ENCODE measurements at regions of chr1 and their contacts with region 1.

Region 1: DNA sequence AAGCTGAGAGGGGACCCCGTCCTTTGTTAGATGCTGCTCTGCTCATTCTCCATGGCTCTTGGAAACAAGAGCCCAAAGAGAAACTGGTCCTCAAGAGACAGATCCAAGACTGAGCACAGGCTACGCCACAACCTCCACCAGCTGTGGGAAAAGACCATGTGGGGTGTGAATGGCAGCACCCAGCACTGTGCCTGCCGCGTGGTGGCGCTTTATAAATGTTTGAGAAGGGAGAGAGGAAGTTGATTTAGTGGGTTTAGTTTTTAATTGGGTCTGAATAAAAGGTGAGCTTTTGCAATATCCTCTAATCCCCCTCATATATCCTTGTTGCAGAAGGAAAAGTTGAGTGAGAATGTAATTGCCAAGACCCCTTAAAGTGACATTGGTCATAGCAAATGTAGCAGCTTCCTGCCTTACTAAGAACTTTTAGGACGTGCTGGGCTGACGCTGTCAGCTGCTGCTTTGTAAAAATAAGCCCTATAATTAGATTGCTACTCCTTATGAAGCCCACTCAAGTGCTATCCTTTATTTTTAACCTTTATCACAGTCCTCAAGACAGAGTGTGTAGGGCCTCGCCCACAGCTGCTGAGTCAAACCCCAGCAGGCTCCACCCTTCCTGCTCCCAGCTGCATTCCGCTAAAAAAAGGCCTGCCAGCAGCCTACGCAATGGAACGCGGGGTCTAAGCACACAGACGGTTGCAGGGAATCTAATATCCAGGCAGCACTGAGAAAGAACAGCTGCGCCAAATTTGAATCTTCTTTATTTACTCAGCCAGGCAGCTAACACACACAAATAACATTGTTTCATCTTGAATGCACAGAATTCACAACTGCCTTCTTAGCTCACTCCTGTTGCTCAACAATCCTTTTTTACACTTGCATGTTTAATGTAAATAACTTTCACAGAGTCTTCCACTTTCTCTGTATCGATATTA is 47.4 kb upstream of the PRDX6 start:
- DNase-seq: peak; percentile 83 to 88
- ATAC-seq: peak; percentile 65

Region 2: GRCh38 chr1:173476664-173477285 is 47.0 kb after region 1 on chr1:
- intact Hi-C with region 1: loop called in 1 of 2 experiments (anchors 5 kb)
- DNase-seq: peak; percentile 93 to 95
- ATAC-seq: peak; percentile 79

Region 3: GRCh38 chr1:173562813-173563212 is 133.1 kb after region 1 on chr1:
- intact Hi-C with region 1: no loop called
- DNase-seq: no peak
- ATAC-seq: no peak